ENCODE measurements at regions of chr10 and their contacts with region 1.

Region 1: GRCh38 chr10:6151087-6151977 is 51.4 kb upstream of the PFKFB3 start:
- DNase-seq: peak; percentile 77 to 86
- H3K4me3 ChIP-seq: peak overlapping the region in 1 of 2 donors; percentile 26
- H3K27ac ChIP-seq: peak overlapping the region; percentile 25 to 34
- H3K4me1 ChIP-seq: peaks cover 0 to 25% (median 3%) of the 10 kb centered on the region in 4 donors
- H3K27me3 ChIP-seq: no peaks in the 10 kb centered on the region
- CTCF ChIP-seq: peak; percentile 56

Region 2: DNA sequence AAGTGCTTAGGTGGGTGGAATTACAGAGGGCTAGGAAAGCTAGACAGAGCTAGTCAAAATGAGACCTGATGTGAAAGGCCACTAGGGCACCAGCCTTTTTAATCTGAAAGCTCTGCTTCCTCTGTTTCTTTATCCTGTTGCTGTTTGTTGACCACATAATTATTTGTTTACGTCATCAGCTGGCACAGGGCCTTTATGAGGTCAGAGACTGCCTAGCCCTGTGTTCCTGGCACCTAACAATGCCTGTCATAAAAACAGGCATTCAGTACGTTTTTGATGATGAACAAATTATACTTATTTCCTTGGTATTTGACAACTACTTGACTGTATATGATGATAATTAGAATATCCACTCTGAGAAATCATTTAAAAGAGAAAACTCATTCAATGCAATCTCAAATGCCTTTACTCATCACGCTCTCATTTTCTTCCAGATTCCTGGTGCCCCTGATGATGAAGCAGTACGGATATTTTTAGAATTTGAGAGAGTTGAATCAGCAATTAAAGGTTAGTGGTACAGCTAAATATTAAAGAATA is 36.5 kb before region 1 on chr10:
- intact Hi-C with region 1: loop called (anchors 5 kb)
- DNase-seq: no peak
- H3K4me3 ChIP-seq: no peak overlapping the region
- H3K27ac ChIP-seq: peak overlapping the region in 1 of 2 donors; percentile 16
- H3K4me1 ChIP-seq: peaks cover 0 to 14% (median 0%) of the 10 kb centered on the region in 4 donors
- H3K27me3 ChIP-seq: no peaks in the 10 kb centered on the region
- CTCF ChIP-seq: no peak